ENCODE measurements at regions of chr16 and their contacts with region 1.

Region 1: GRCh38 chr16:69286941-69287713 is 24.0 kb upstream of the VPS4A start:
- DNase-seq: peak in 16 of 42 donors; percentile 12 to 78 (median 36)

Region 2: DNA sequence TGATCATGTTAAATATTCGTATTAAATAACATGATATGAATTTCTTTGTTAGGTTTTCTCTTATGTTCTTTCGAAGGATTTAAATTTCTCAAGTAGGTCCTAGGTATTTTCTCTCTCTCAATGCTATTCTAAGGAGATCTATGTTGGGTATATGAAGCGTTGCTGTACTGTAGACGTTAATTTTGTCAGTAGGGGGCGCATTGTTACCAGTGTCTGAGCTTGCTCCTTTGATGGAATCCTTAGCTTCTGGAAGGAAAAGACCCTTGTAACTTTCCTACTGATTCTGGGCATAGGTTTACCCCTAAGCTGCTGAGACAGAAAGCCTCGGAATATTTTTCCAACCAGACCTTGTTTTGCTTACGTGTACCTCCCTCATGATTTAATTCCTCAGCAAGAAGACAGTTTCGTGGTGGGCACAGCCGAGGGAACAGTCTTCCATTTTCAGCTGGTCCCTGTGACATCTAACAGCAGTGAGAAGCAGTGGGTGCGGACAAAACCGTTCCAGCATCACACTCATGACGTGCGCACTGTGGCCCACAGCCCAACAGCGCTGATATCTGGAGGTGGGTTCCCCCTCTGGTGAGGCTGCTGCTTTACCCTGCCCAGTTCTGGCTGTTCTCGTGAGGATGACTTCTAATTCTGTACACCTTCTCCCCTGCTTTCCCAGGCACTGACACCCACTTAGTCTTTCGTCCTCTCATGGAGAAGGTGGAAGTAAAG is 136.8 kb before region 1 on chr16:
- intact Hi-C with region 1: loop called (anchors 10 kb)
- DNase-seq: peak in 37 of 42 donors; percentile 13 to 88 (median 61)

Region 3: DNA sequence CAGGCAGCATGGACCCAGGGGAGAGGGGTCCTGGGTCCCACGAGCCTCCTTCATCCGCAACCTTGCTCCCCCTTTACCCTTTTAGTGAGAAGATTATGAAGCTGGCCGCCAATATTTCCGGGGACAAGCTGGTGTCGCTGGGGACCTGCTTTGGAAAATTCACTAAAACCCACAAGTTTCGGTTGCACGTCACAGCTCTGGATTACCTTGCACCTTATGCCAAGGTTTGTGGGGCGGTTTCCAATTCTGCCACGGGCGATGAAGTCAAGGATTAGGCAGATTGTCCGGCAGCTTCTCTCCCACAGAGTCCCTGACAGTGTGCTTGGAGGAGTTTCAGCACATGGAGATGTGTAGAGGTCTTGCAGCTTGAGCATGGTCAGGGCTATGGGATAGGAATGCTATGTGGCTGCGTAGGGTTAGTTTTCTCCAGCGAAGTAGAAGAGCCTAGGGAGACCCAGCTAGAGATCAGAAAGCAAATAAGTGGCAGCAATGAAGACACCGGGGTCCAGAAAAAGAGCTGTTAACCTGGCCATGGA is 53.0 kb after region 1 on chr16:
- intact Hi-C with region 1: no loop called
- DNase-seq: no peak